Activated T-helper 1 cell treated with anti-CD3 and anti-CD28 coated beads, Interleukin-12 subunit alpha, Interleukin-12 subunit beta, Interleukin-2, Interleukin-4 antibody, amounts not matched to agents 30 ng/mL and 10 ng/mL and 1 ng/mL, durations not matched to agents 14 hours and 24 hours and 36 hours (primary cell): ENCODE measurements at regions of chr7 and their contacts with region 1.

Region 1: GRCh38 chr7:116588641-116589594 is 64.1 kb downstream of the CAV1 start:
- DNase-seq: no peak
- H3K4me3 Mint-ChIP-seq: no peak overlapping the region
- H3K27ac Mint-ChIP-seq: peak overlapping the region; percentile 50
- H3K4me1 Mint-ChIP-seq: peaks cover 17% of the 10 kb centered on the region
- H3K27me3 Mint-ChIP-seq: peaks cover 21% of the 10 kb centered on the region

Region 2: DNA sequence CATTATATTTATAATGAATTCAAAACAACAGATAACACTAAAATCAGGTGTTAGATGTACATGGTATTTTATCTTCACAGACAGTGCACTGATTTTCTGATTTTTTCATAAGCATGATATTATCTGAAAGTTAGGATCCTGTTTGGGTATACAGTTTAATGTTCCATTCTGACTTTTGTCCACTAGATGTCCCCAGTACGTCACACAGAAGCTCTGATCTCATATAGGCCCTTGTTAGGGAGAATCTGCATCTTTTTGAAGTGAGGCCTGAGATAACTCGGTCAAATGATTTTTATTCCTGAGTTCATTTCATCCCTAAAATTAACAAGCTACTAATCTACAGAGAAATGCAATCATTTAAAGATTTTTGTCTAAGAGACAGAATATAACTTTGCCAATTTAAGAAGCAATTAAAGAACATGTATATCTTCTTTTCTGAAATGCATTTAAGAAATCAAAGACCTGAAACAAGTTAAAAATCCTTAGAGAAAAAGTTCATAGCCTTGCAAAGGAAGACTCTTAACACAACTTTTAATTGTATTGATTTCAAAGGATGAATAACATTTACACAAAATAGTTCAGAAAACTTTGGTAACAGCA is 450.6 kb before region 1 on chr7:
- intact Hi-C with region 1: loop called (anchors 1 kb)
- DNase-seq: peak; percentile 16
- H3K4me3 Mint-ChIP-seq: no peak overlapping the region
- H3K27ac Mint-ChIP-seq: no peak overlapping the region
- H3K4me1 Mint-ChIP-seq: peaks cover 20% of the 10 kb centered on the region
- H3K27me3 Mint-ChIP-seq: peaks cover 9% of the 10 kb centered on the region

Region 3: DNA sequence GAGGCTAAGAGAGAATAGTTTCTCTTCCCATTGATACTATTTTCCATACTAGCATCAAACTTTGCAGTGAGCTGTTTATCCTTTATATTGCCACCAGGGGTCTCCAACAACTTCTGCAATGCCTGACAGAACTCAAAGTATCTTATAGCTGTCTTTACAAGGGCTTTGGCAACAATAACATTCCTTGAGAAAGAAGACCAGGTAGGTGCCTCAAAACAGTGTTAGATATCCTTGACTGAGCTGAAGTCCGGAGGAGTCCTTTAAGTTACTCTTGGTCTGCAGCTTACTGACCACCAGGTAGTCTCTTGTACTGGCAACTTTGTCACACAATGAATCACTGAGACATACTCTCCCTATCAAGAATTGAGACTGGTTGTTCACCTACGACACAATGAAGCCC is 408.6 kb before region 1 on chr7:
- intact Hi-C with region 1: loop called (anchors 1 kb)
- DNase-seq: peak; percentile 13
- H3K4me3 Mint-ChIP-seq: no peak overlapping the region
- H3K27ac Mint-ChIP-seq: no peak overlapping the region
- H3K4me1 Mint-ChIP-seq: no peaks in the 10 kb centered on the region
- H3K27me3 Mint-ChIP-seq: peaks cover 2% of the 10 kb centered on the region

Region 4: DNA sequence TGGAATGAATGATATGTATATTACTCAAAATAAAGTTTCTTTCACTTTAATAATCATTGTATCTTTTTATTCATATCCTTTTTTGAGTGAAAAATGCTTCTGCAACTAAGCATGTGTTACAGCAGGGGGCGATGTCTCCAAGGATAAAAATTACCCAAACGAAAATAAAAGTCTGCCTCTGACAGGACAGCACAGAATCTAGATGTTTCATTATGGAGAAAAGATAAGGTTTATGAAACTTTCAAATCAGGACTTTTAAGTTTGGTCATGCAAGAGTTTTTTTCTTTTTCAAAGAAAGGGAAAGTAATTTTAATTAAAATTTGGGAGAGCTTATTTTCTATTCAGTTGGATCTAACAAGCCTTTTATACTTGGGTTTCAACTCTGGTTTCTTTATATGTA is 330.2 kb before region 1 on chr7:
- intact Hi-C with region 1: loop called (anchors 1 kb)
- DNase-seq: no peak
- H3K4me3 Mint-ChIP-seq: no peak overlapping the region
- H3K27ac Mint-ChIP-seq: no peak overlapping the region
- H3K4me1 Mint-ChIP-seq: peaks cover 5% of the 10 kb centered on the region
- H3K27me3 Mint-ChIP-seq: no peaks in the 10 kb centered on the region

Region 5: DNA sequence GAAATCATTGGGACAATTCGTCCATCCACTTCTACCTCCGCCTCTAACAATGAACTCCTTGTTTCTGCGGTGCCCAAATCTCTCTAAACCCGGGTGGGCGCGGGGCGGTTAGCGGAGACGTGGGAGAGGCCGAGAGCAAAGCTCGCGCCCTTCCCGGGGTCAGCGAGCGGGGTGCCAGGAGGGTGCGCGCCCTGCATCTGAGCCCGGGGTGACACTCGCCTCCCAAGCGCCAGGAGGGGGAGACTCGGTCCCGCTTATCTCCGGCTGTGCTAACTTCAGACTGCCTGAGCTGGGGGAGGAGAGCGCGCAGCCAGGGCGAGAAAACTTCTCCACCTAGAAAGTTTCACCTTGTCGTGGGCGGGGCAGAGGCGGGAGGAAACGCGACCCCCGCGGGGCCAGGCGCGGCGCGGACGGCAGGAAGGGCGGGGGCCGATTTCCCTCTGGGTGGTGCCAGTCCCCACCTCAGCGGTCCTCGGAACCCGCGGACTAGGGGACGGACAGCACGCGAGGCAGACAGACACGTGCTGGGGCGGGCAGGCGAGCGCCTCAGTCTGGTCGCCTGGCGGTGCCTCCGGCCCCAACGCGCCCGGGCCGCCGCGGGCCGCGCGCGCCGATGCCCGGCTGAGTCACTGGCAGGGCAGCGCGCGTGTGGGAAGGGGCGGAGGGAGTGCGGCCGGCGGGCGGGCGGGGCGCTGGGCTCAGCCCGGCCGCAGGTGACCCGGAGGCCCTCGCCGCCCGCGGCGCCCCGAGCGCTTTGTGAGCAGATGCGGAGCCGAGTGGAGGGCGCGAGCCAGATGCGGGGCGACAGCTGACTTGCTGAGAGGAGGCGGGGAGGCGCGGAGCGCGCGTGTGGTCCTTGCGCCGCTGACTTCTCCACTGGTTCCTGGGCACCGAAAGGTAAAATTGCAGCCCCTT is 83.0 kb after region 1 on chr7 and contains the start of gene MET:
- intact Hi-C with region 1: loop called (anchors 2 kb)
- DNase-seq: peak; percentile 33
- H3K4me3 Mint-ChIP-seq: peak within 1 kb of the TSS; percentile 79
- H3K27ac Mint-ChIP-seq: peak within 1 kb of the TSS; percentile 76
- H3K4me1 Mint-ChIP-seq: no peaks in the 10 kb centered on the region
- H3K27me3 Mint-ChIP-seq: peaks cover 67% of the 10 kb centered on the region
- total RNA-seq, gene MET: 3.2 TPM in 2 replicates